CD4-positive, alpha-beta memory T cell (primary cell): ENCODE measurements at regions of chr1 and their contacts with region 1.

Region 1: DNA sequence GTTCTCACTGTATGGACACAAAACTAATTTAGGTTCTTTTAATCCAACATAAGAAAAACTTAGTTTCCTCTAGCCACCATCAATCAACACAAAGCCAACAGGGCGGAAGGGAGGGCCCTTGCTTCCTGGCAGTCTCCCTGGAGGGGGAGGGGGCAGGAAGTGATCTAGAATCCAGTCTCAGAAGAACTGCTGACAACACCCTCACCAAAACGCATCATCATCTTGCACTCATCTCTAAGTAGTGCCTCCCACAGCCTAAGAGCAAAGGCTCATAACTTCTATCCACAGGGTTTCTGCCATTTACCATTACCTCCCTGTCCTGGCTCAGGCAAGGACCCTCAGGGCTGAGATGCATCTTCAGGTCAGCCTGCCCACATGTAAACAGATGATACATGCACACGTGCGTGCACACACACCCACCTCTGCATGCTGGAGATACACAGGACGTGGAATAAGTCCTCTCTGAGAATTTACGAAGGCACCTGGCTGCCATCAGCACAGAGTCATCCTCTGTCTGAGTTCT is 20.5 kb downstream of the HIVEP3 start:
- DNase-seq: peak; percentile 83 to 92 (median 88)
- H3K4me3 ChIP-seq: peak overlapping the region in 1 of 2 donors; percentile 36
- H3K4me3 Mint-ChIP-seq: peak overlapping the region; percentile 40 to 87 (median 81)
- H3K27ac ChIP-seq: peak overlapping the region; percentile 58
- H3K27ac Mint-ChIP-seq: peak overlapping the region; percentile 91 to 99 (median 96)
- H3K4me1 ChIP-seq: peaks cover 95% of the 10 kb centered on the region
- H3K4me1 Mint-ChIP-seq: peaks cover 78 to 90% (median 81%) of the 10 kb centered on the region in 4 donors
- H3K27me3 ChIP-seq: no peaks in the 10 kb centered on the region
- H3K27me3 Mint-ChIP-seq: no peaks in the 10 kb centered on the region

Region 2: GRCh38 chr1:41914516-41914915 is 16.3 kb after region 1 on chr1:
- CTCF ChIA-PET with region 1: interaction called, 84 read pairs
- POLR2A ChIA-PET with region 1: interaction called, 221 read pairs
- intact Hi-C with region 1: loop called (anchors 1 kb)
- DNase-seq: peak; percentile 44 to 64 (median 53)
- H3K4me3 ChIP-seq: no peak overlapping the region
- H3K4me3 Mint-ChIP-seq: peak overlapping the region; percentile 26 to 95 (median 74)
- H3K27ac ChIP-seq: peak overlapping the region; percentile 11
- H3K27ac Mint-ChIP-seq: peak overlapping the region; percentile 93 to 99 (median 95)
- H3K4me1 ChIP-seq: peaks cover 75% of the 10 kb centered on the region
- H3K4me1 Mint-ChIP-seq: peaks cover 67 to 87% (median 69%) of the 10 kb centered on the region in 4 donors
- H3K27me3 ChIP-seq: no peaks in the 10 kb centered on the region
- H3K27me3 Mint-ChIP-seq: no peaks in the 10 kb centered on the region